PC-9 (cell line): ENCODE measurements at regions of chr2 and their contacts with region 1.

Region 1: GRCh38 chr2:170695521-170696410 is 19.4 kb upstream of the SP5 start:
- DNase-seq: no peak
- H3K4me3 ChIP-seq: no peak overlapping the region
- H3K27ac ChIP-seq: no peak overlapping the region
- H3K4me1 ChIP-seq: no peaks in the 10 kb centered on the region
- H3K27me3 ChIP-seq: no peaks in the 10 kb centered on the region
- CTCF ChIP-seq: no peak

Region 2: DNA sequence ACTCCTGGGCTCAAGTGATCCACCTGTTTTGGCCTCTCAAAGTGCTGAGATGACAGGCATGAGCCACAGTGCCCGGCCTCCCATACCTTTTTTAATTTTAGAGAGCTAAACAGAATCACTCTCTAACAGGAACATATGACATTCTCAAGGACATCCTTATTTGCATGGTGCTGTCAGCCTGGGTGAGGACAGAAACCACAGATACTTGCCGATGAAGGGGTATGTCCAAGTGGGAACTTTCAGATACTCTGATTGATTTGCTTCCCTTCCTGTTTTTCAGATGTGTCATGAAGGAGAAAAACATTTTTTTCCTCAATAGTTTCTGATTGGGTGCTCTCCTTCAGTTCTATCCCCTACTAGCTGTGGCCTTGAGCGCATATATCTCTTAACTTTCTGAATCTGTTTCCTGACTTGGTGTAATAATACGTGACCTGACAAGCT is 468.2 kb before region 1 on chr2:
- CTCF ChIA-PET with region 1: no interaction called
- POLR2A ChIA-PET with region 1: no interaction called
- intact Hi-C with region 1: no loop called
- DNase-seq: no peak
- H3K4me3 ChIP-seq: no peak overlapping the region
- H3K27ac ChIP-seq: no peak overlapping the region
- H3K4me1 ChIP-seq: 0 out of 2 replicates have a peak, but pooled peaks cover 4% of the 10 kb centered on the region
- H3K27me3 ChIP-seq: no peaks in the 10 kb centered on the region
- CTCF ChIP-seq: no peak

Region 3: DNA sequence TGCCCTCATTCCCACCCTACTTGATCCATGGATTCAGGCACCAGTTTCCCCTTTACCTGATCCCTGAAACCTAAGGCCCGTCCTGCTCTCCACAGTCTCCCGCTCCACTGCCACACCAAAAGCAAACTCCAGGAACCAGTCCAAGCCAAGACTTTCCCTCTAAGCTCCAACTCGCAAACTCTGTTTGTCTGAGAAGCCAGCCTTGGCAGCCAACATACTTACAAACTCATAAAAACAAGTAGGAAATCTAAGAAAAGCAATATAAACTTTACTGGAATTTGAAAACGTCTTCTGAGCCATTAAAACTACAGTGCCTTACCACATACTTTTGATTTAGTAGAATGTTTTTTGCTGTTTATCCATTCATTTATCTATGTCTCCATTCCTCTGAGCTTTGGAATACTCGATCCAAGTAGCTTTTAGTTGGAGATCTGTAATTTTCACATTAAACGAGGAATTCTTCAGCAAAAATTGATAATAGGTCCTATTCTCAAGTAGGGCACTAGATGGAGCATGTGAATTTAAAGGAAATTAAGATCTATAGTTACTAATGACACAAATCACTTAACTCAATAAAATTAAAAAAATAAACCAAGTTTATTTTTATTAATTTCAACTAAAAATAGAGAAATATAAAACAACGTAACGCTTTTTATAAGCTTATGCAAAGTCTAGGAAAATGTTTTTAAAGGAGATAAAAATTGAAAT is 318.1 kb before region 1 on chr2:
- CTCF ChIA-PET with region 1: interaction called, 10 read pairs
- POLR2A ChIA-PET with region 1: no interaction called
- intact Hi-C with region 1: no loop called
- DNase-seq: no peak
- H3K4me3 ChIP-seq: no peak overlapping the region
- H3K27ac ChIP-seq: no peak overlapping the region
- H3K4me1 ChIP-seq: peaks cover 46% of the 10 kb centered on the region
- H3K27me3 ChIP-seq: no peaks in the 10 kb centered on the region
- CTCF ChIP-seq: no peak; the same call in 1 of the 2 replicates